MCF 10A (cell line): ENCODE measurements at regions of chr19 and their contacts with region 1.

Region 1: DNA sequence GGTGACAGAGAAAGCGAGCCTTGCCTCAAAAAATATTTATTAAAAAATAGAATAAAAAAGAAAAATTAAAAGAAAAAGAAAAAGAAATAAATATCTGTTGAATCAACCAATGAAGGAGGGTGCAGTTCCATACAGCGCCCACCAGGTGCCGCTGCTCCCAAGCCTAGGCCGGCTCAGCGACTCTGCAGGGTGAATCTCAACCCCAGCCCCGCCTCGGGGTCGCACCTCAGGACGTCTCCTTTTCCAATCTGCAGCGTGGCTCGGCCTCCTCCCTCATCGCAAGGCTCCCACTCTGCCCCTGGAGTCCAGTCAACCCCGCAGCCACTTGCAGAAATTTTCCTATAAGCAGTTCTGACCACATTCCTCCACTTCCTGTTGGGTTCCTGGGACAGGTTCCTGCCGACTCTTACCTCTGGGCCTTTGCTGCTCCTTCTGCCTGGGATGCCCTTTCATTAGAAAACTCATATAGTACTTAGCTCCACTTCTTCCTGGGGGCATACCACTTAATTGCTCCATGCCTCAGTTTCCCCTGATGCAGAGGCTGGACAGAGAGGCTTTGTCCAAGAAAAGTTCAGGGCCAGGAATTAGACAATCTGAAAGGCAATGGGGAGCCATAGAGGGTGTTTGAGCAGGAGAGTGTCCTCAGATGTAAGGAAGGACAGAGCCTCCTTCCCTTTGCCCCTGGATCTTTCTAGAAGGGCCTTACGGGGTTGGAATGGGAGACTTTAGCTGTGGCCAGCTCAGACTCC is 24.3 kb downstream of the NFILZ start:
- DNase-seq: peak; percentile 49
- H3K4me3 Mint-ChIP-seq: peak overlapping the region; percentile 45
- H3K27ac Mint-ChIP-seq: no peak overlapping the region
- H3K4me1 Mint-ChIP-seq: no peaks in the 10 kb centered on the region
- H3K27me3 Mint-ChIP-seq: no peaks in the 10 kb centered on the region
- CTCF ChIP-seq: peak; percentile 96

Region 2: DNA sequence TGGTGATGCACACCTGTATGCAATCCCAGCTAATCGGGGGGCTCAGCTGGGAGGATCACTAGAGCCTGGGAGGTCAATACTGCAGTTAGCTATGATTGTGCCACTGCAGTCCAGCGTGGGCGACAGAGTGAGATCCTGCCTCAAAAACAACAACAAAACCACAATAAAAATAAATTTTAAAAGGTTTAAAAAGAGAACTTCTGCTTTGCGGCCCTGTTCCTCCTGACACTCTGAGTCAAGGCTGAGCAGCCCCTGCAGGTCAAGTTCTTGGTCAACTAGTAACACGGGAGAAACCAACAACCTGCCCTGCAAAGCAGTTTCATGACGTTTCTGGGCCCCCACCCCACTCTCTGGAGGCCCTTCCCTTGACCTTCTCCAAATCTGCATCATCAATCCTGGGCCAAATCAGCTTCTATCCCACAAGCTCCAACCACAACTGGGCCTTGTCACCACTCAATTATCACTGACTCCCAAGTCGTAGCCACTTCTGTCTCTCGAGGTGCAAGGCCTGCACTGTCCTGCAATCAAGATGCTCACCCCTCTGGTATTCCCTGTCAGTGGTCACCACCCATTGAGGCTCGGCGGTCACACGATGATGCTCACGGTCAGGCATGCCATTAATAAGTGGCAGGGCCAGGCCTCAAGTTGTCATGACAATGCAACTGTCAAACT is 656.8 kb before region 1 on chr19:
- CTCF ChIA-PET with region 1: no interaction called
- POLR2A ChIA-PET with region 1: no interaction called
- intact Hi-C with region 1: no loop called
- DNase-seq: no peak
- H3K4me3 Mint-ChIP-seq: no peak overlapping the region
- H3K27ac Mint-ChIP-seq: no peak overlapping the region
- H3K4me1 Mint-ChIP-seq: peaks cover 44% of the 10 kb centered on the region
- H3K27me3 Mint-ChIP-seq: no peaks in the 10 kb centered on the region
- CTCF ChIP-seq: no peak

Region 3: GRCh38 chr19:8307965-8308866 is 346.5 kb before region 1 on chr19 and contains the start of gene CD320:
- CTCF ChIA-PET with region 1: no interaction called
- POLR2A ChIA-PET with region 1: no interaction called
- intact Hi-C with region 1: no loop called
- DNase-seq: peak; percentile 94
- H3K4me3 Mint-ChIP-seq: peak within 1 kb of the TSS; percentile 86
- H3K27ac Mint-ChIP-seq: peak within 1 kb of the TSS; percentile 9
- H3K4me1 Mint-ChIP-seq: peaks cover 15% of the 10 kb centered on the region
- H3K27me3 Mint-ChIP-seq: no peaks in the 10 kb centered on the region
- CTCF ChIP-seq: no peak
- total RNA-seq, gene CD320: 39.2 and 68.8 TPM in 2 replicates

Region 4: GRCh38 chr19:8552810-8553209 is 102.0 kb before region 1 on chr19:
- CTCF ChIA-PET with region 1: no interaction called
- POLR2A ChIA-PET with region 1: no interaction called
- intact Hi-C with region 1: no loop called
- DNase-seq: peak; percentile 26
- H3K4me3 Mint-ChIP-seq: no peak overlapping the region
- H3K27ac Mint-ChIP-seq: no peak overlapping the region
- H3K4me1 Mint-ChIP-seq: no peaks in the 10 kb centered on the region
- H3K27me3 Mint-ChIP-seq: peaks cover 5% of the 10 kb centered on the region
- CTCF ChIP-seq: no peak

Region 5: DNA sequence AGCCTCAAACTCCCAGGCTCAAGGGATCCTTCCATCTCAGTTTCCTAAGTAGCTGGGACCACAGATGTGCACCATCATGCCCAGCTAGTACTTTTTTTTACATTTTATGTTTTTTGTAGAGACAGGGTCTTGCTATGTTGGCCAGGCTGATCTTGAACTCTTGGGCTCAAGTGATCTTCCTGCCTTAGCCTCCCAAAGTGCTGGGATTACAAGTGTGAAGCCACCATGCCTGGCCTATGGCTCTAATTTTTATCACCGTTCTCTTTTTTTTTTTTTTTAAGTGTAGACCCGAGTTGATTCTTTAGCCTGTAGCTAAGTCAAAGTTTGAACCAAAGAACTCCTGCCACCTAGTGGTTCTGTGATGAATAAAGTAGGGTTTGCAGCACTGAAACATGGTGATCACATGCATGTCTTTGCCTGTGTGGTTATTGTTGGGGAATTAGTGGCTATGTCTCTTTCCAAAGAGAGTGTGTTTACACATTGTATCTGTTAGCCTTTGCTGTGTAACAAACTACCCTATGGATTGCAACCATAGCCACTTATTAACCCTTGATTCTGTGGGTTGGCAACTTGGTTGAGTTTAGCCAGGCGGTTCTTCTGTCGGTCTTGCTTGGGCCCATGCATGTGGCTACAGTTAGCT is 12.7 kb before region 1 on chr19:
- CTCF ChIA-PET with region 1: interaction called, 38 read pairs
- POLR2A ChIA-PET with region 1: no interaction called
- intact Hi-C with region 1: no loop called
- DNase-seq: peak; percentile 52
- H3K4me3 Mint-ChIP-seq: no peak overlapping the region
- H3K27ac Mint-ChIP-seq: no peak overlapping the region
- H3K4me1 Mint-ChIP-seq: peaks cover 5% of the 10 kb centered on the region
- H3K27me3 Mint-ChIP-seq: no peaks in the 10 kb centered on the region
- CTCF ChIP-seq: peak; percentile 35

Region 6: GRCh38 chr19:8695501-8695900 is 40.7 kb after region 1 on chr19:
- CTCF ChIA-PET with region 1: interaction called, 24 read pairs
- POLR2A ChIA-PET with region 1: no interaction called
- intact Hi-C with region 1: no loop called
- DNase-seq: no peak
- H3K4me3 Mint-ChIP-seq: no peak overlapping the region
- H3K27ac Mint-ChIP-seq: no peak overlapping the region
- H3K4me1 Mint-ChIP-seq: no peaks in the 10 kb centered on the region
- H3K27me3 Mint-ChIP-seq: no peaks in the 10 kb centered on the region
- CTCF ChIP-seq: no peak

Region 7: GRCh38 chr19:8705742-8706141 is 51.0 kb after region 1 on chr19:
- CTCF ChIA-PET with region 1: no interaction called
- POLR2A ChIA-PET with region 1: no interaction called
- intact Hi-C with region 1: no loop called
- DNase-seq: no peak
- H3K4me3 Mint-ChIP-seq: no peak overlapping the region
- H3K27ac Mint-ChIP-seq: no peak overlapping the region
- H3K4me1 Mint-ChIP-seq: no peaks in the 10 kb centered on the region
- H3K27me3 Mint-ChIP-seq: no peaks in the 10 kb centered on the region
- CTCF ChIP-seq: no peak